AG04449 (cell line): ENCODE measurements at regions of chr4 and their contacts with region 1.

Region 1: GRCh38 chr4:57163530-57164459 is 53.6 kb upstream of the IGFBP7 start:
- DNase-seq: no peak
- H3K4me3 ChIP-seq: peak overlapping the region; percentile 77
- CTCF ChIP-seq: peak; percentile 99

Region 2: DNA sequence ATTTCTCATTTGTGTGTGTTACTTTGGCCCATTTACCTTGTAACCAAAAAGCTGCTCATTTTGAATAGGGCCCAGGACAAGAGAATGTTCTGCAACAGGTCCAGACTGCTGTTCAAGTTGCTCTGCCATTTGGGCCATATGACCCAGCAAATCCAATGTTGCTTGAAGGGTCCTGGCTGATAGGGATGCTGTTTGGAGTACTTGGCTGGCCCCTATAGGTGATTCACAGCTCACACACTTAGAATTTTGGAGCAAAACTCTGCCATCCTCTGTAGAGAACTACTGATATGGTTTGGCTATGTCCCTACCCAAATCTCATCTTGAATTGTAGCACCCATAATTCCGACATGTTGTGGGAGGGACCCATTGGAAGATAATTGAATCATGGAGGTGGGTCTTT is 908.0 kb before region 1 on chr4:
- CTCF ChIA-PET with region 1: no interaction called
- POLR2A ChIA-PET with region 1: no interaction called
- DNase-seq: no peak
- H3K4me3 ChIP-seq: no peak overlapping the region
- CTCF ChIP-seq: no peak

Region 3: GRCh38 chr4:56907489-56908205 is 256.1 kb before region 1 on chr4 and contains the start of gene REST:
- CTCF ChIA-PET with region 1: no interaction called
- POLR2A ChIA-PET with region 1: no interaction called
- DNase-seq: no peak
- H3K4me3 ChIP-seq: peak within 1 kb of the TSS; percentile 89
- CTCF ChIP-seq: no peak

Region 4: GRCh38 chr4:56953680-56954520 is 209.9 kb before region 1 on chr4:
- CTCF ChIA-PET with region 1: no interaction called
- POLR2A ChIA-PET with region 1: no interaction called
- DNase-seq: no peak
- H3K4me3 ChIP-seq: no peak overlapping the region
- CTCF ChIP-seq: no peak

Region 5: DNA sequence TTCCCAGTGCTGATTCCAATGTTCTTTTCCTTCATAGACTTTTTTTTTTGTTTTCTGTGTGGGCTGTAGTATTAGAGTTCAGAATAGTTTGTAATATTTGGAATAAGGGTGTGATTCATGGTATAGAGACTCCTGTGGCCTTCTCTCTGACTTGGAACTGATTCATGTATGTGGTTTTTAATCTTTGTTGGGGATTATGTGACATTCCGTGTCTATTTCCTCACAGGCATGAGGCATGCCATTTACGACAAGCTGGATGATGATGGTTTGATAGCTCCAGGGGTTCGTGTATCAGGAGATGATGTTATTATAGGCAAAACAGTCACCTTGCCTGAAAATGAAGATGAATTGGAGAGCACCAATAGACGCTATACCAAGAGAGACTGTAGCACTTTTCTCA is 140.7 kb before region 1 on chr4:
- CTCF ChIA-PET with region 1: interaction called, 30 read pairs
- POLR2A ChIA-PET with region 1: no interaction called
- DNase-seq: peak; percentile 88
- H3K4me3 ChIP-seq: no peak overlapping the region
- CTCF ChIP-seq: no peak

Region 6: DNA sequence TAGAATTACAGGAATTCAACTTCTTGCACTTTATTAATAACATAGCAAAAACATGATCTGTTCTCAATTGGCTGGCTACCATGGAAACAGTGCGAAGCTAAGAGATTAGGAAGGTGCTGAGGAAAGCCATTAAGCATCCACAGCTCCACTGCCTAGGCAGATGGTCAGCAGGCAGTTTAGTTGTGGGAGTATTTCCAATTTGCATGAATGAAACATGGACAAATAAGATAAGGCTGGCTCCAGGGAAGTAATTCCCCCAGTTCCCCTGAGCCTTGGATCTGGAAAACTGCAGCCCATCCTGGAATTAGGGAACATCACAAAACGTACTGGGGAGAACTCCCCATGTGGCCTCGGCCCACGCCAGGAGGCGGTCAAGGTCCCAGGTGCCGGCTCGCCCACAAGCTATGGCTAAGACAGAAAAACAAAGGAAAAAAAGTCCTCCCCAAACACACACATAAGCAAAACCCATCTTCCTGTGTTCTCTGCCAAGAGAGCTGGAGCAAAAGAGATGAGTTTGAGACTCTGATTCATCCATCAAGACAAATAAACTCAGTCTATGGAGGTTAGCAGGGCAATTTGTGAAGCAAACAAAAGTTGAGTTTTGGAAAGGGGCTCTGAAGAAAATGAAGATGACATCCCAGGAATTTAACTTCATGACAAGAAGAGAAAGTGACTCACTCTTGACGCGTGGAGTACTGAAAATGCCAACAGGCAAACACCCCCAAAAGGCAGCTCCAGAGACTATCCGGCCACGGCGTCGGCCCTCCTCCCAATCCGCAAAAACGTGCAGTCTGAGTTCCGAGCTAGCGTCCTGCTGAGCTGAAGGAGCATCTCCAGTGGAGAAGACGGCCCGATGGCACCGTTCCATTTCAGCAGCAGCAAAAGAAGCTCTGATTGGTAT is 98.7 kb before region 1 on chr4:
- CTCF ChIA-PET with region 1: interaction called, 11 read pairs
- POLR2A ChIA-PET with region 1: no interaction called
- DNase-seq: peak; percentile 95
- H3K4me3 ChIP-seq: no peak overlapping the region; the same call in none of the 2 replicates
- CTCF ChIP-seq: no peak

Region 7: DNA sequence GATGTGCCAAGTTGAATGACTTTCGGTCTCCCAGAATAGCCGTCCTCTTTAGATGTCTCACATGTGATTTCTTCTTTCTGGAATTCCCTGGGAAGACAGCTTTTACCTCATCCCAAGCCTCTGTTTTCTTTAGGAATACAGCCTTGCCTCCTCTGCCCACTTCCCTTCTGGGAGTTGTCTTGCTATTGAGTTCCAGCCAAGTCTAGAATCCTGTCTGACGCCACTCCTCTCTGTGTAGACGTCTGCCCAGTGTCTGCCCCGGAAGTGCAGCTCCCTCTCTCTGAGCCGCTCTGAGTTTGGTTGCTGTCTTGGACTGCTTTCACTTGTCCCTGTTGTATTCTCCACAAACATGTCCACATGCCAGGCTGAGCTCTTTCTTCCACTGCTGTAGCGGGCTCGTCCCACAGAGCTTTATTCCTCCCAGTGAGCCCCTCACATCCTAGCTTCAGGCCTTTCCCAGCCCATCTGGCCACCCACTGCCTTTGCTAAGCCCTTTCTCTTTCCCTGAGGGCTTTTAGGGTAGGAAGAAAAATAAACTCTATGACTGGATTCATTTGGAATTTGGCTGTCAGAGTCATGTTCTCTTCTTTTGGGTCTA is 44.6 kb before region 1 on chr4:
- CTCF ChIA-PET with region 1: interaction called, 24 read pairs
- POLR2A ChIA-PET with region 1: interaction called, 4 read pairs
- DNase-seq: peak; percentile 95
- H3K4me3 ChIP-seq: peak overlapping the region; percentile 48
- CTCF ChIP-seq: no peak

Region 8: DNA sequence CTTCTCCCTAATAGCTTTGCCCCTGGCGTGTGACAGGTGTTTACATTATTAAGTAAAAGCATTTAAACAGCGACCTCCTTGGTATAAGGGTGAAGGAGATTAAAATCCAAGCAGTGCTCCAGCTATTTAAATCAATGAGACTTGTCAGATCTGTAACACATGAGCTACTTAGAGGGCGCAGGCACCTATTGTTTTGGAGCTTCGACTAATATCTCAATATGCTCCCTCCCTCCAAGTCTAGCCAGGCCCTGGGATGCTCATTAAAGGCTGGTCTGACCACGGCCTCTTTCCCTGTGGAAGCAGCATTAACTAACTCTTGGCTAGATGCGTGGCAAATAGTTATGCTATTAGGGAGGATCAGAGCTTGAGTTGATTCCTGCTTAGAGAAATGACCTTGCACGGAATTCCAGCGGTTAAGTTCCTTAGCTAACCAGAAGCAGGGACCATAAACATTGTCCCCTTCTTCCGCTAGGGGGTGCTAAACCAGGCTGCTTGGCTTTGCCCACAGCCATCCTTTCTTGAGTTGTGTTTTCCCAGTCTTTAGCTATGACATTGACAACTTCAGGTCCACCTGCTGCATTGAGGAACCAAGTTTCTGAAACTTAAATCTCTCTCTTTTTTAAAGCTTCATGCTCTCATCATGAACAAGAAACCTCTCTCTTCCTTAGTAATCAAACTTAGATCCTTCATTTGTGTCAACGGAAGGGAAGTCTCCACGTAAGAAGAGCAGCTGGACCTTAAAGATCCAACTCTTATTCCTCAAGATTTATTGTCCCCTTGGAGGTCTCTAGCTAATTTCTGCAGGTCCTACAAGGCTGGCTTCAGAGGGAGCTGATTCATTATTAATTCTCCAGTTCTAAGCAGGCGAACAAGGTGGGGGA is 27.0 kb after region 1 on chr4:
- CTCF ChIA-PET with region 1: interaction called, 66 read pairs
- POLR2A ChIA-PET with region 1: no interaction called
- DNase-seq: no peak
- H3K4me3 ChIP-seq: no peak overlapping the region
- CTCF ChIP-seq: peak; percentile 51

Region 9: DNA sequence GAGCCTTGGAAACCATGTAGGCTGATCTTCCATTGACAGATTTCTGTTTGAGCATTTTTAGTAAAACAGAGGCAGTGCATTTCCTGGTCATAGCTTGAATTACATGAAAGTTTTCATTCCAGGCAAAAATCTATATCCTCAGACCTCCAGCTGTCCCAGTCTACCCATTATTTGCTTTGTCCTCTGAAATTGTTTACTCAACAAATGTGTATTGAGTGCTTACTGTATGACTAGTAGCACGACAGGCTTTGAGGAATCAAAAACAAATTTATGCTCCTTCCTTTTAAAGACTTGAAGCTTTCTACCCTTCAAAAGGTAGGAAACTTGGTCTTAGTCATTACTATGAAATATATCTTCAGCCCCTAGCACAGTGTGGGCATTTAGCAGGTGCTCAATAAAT is 254.3 kb after region 1 on chr4:
- CTCF ChIA-PET with region 1: interaction called, 131 read pairs
- POLR2A ChIA-PET with region 1: no interaction called
- DNase-seq: no peak
- H3K4me3 ChIP-seq: no peak overlapping the region
- CTCF ChIP-seq: no peak

Region 10: GRCh38 chr4:57442831-57443291 is 279.1 kb after region 1 on chr4:
- CTCF ChIA-PET with region 1: interaction called, 49 read pairs
- POLR2A ChIA-PET with region 1: no interaction called
- DNase-seq: no peak
- H3K4me3 ChIP-seq: no peak overlapping the region
- CTCF ChIP-seq: peak; percentile 72

Region 11: GRCh38 chr4:57734104-57734670 is 570.4 kb after region 1 on chr4:
- CTCF ChIA-PET with region 1: no interaction called
- POLR2A ChIA-PET with region 1: no interaction called
- DNase-seq: no peak
- H3K4me3 ChIP-seq: no peak overlapping the region
- CTCF ChIP-seq: no peak